ENCODE measurements at regions of chr17 and their contacts with region 1.

Region 1: DNA sequence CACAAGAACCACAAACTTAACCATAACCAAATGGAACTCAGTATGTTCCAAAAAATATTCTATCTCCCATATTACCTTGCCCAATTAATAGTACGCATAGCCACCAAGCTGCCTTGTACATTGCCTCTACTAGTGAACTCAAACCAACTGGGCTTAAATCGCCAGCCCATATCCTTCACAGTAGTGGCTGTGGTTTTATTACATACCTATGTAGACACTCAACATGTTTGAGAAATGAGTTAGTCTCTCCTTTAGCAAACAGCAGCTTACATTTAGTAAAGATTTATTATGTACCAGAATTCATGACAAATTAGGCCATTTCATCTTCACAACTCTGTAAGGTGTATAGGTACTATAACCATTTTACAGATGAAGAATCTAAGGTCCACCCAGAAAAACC is 41.4 kb downstream of the GRB2 start:
- DNase-seq: no peak
- CTCF ChIP-seq: no peak

Region 2: DNA sequence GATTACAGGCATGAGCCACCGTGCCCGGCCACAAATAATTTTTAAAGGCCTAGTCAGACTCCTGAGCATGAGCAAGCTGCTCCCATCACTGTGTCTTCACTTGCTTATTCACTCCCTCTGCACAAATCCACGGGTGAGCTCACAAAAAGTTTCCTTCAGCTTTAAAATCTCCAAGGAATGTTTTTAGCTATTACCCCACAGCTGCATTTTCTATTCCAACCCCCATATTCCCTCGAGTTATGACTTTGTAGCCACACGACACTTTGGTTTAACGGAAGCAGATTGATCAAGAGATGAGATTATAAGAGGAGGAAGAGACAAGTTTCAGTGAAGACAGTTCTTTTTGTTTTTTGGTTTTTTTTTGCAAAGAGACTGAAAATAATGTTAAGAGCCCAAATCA is 25.7 kb before region 1 on chr17:
- CTCF ChIA-PET with region 1: interaction called, 10 read pairs
- POLR2A ChIA-PET with region 1: no interaction called
- DNase-seq: no peak
- CTCF ChIP-seq: no peak

Region 3: DNA sequence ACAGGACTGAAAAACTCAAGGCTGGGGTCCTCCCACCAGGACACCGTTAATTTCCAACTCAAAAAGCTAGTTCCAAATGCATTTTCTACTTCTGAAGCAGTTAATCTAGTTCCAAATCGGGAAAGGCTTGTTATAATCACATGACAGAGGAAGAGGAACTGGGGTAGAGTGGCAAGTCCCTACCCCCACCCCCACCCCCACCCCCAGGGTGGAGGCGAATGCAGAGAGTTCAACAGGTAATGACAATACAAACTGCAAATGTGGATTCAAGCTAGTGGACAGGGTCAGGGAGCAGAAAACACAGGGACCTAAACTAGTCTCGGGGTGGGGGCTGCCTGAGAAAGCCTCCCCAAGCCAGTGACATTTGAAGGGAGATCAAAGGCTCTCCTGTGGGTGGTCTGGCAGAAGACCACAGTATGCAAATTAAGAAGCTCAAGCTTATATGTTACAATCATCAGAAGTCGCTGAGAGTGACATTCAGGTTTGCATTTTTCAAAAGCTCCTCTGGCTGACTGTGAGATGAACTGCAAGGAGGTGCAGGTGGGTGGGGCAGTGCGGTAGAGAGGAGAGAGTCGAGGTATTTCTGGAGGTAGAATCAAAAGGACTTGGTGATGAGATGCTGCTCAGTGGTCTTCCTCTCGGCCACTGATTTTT is 18.4 kb before region 1 on chr17:
- CTCF ChIA-PET with region 1: interaction called, 11 read pairs
- POLR2A ChIA-PET with region 1: no interaction called
- DNase-seq: peak; percentile 71
- CTCF ChIP-seq: no peak

Region 4: GRCh38 chr17:75380315-75380714 is 16.2 kb after region 1 on chr17:
- CTCF ChIA-PET with region 1: interaction called, 10 read pairs
- POLR2A ChIA-PET with region 1: no interaction called
- DNase-seq: no peak
- CTCF ChIP-seq: no peak